GM23248 (cell line): ENCODE measurements at regions of chr6 and their contacts with region 1.

Region 1: GRCh38 chr6:46419576-46420002 is 71.7 kb downstream of the RCAN2 start:
- DNase-seq: peak; percentile 86
- H3K4me3 ChIP-seq: no peak overlapping the region
- H3K27ac ChIP-seq: no peak overlapping the region
- H3K4me1 ChIP-seq: peaks cover 18% of the 10 kb centered on the region
- H3K27me3 ChIP-seq: no peaks in the 10 kb centered on the region

Region 2: DNA sequence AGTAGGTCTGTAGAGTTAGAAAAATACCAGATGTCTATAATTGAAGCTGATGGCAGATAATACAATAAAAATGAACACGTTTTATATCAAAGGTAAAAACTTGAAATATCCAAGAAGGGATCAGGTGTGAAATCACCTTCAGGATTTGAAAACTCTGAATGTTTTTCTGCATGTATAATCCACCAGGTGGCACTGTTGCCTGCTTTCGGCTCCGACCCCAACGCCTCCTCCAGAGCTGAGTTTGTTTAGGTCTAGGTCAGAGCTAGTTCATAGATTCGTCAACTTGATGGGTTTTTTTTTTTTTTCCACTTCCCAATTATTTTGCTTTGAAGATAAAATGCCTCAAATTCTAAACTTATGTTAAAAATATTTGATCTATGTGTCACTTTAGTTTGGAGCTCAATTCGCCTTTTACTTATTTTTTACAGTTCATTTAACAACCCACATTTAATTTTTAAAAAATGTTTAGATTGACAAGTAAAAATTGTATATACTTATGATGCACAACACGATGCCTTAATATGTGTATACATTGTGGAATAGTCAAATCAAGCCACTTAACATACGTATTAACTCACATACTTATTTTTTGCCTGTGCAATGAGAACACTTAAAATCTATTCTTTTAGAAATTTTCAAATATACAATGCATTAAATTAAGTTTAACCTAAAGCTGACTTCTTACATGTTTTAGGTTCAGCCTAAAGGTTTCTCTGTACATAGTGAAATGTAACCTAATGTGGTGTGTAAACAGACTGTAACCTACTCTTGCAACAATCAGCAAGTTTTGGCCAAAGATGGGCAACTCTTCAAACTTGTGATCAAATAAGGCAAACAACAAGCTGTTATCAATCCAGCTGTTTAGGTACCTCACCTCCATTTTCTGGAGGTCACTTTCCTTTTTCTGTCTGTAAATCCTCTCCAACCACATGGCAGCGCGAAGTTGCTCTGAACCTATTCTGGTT is 329.2 kb before region 1 on chr6:
- in situ Hi-C with region 1: loop called (anchors 25 kb)
- DNase-seq: peak; percentile 72
- H3K4me3 ChIP-seq: no peak overlapping the region
- H3K27ac ChIP-seq: no peak overlapping the region
- H3K4me1 ChIP-seq: no peaks in the 10 kb centered on the region
- H3K27me3 ChIP-seq: peaks cover 6% of the 10 kb centered on the region

Region 3: GRCh38 chr6:46612645-46613044 is 193.1 kb after region 1 on chr6:
- in situ Hi-C with region 1: loop called (anchors 10 kb)
- DNase-seq: no peak
- H3K4me3 ChIP-seq: no peak overlapping the region
- H3K27ac ChIP-seq: no peak overlapping the region
- H3K4me1 ChIP-seq: no peaks in the 10 kb centered on the region
- H3K27me3 ChIP-seq: no peaks in the 10 kb centered on the region

Region 4: DNA sequence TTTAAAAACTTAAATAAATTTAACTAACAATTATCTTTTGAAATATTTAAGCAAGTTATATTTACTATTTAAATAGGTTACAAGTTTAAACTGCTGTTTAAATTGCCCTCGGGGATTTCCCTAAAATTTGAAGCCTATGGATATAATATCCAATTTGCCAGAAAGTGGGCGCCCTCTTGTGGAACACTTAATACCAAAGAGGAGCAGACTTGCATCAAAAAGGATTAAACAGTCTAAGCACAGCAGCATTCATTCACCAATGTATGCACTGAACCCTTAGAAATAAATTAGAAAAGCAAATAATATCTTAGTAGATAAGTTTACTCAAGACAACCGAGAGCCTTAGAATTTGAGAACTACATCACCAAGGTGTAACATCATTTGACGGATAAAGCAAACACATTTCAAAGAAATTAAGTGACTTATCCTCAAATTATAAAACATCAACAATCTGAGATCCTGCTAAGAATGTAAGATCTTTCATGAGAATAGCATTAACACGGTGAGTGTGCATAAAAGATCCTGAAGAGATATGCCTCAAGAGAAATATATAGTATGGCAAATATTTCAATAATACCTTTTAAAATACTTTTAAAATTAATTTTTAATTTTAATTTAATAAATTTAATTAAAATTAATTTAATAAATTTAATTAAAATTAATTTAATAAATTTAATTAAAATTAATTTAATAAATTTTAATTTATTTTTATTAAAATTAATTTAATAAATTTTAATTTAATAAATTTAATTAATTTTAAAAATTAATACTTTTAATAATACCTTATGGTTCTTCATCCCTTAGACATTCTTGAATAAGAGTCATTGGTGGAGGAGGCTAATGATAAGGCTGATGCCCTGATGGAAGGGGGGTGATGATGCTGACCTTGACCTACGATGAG is 362.1 kb after region 1 on chr6:
- in situ Hi-C with region 1: loop called (anchors 25 kb)
- DNase-seq: peak; percentile 77
- H3K4me3 ChIP-seq: no peak overlapping the region
- H3K27ac ChIP-seq: no peak overlapping the region
- H3K4me1 ChIP-seq: no peaks in the 10 kb centered on the region
- H3K27me3 ChIP-seq: no peaks in the 10 kb centered on the region